Activated B cell treated with CpG ODN at 0.5 μM for 24 hours (primary cell): ENCODE measurements at regions of chr10 and their contacts with region 1.

Region 1: DNA sequence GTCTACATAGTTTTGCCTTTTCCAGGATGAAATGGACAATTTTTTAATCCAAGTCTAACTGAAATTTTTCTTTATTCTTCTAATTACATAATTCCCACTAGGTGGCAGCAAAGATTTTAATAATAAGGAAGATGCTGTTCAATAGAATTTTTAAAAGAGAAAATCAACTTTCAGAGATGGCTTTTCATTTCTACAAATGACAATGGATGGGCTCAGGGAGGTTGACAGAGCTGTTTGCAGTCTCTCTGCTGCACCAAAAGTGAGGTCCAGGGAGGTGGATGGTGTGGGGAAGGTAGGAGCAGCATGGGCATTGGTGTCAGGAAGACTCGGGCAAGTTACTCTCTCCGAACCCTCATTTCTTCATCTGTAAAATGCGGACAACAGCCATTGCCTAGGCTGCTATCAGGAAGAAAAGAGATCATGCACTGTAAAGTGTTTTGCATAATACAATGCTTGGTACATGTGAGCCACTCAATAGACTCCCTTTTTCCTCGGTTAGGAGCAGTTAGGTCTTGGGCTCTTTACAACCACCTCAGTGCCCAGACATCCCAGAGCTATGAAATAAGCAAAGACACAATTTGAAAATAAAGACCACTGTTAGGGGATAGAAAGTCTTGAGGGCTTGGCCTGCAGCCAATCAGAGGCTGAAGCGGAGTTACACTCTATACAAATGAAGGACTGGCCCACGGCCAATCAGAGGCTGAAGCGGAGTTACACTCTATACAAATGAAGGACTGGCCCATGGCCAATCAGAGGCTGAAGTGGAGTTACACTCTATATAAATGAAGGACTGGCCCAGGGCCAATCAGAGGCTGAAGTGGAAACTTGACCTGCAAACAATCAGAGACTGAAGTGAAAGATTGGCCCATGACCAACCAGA is 107.1 kb downstream of the ABLIM1 start:
- DNase-seq: no peak
- ATAC-seq: no peak
- H3K4me3 Mint-ChIP-seq: no peak overlapping the region
- H3K27ac Mint-ChIP-seq: no peak overlapping the region
- H3K4me1 Mint-ChIP-seq: peaks cover 16% of the 10 kb centered on the region
- H3K27me3 Mint-ChIP-seq: no peaks in the 10 kb centered on the region
- CTCF ChIP-seq: no peak

Region 2: DNA sequence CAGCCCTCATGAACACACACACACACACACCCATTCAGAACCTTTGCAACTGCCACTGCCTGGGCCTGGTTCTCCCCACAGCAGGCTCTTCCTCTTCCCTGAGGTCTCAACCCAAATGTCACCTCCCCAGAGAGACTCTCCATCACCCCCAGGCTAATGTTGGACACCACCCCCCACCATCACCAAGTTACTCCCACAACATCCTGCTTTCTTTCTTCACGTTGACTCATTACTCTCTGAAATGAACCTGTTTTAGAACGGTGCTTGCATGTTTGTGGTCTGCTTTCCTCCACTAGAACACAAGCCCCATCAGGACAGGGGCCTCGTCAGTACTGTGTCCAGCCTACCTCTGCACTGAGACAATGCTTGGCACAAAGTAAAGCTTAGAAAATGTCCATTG is 162.7 kb before region 1 on chr10:
- CTCF ChIA-PET with region 1: no interaction called
- POLR2A ChIA-PET with region 1: no interaction called
- intact Hi-C with region 1: no loop called
- DNase-seq: no peak
- ATAC-seq: no peak
- H3K4me3 Mint-ChIP-seq: no peak overlapping the region
- H3K27ac Mint-ChIP-seq: no peak overlapping the region
- H3K4me1 Mint-ChIP-seq: no peaks in the 10 kb centered on the region
- H3K27me3 Mint-ChIP-seq: peaks cover 12% of the 10 kb centered on the region
- CTCF ChIP-seq: no peak

Region 3: GRCh38 chr10:114615600-114616007 is 64.6 kb after region 1 on chr10:
- CTCF ChIA-PET with region 1: no interaction called
- POLR2A ChIA-PET with region 1: no interaction called
- intact Hi-C with region 1: no loop called
- DNase-seq: no peak
- ATAC-seq: peak; percentile 58
- H3K4me3 Mint-ChIP-seq: peak overlapping the region; percentile 26
- H3K27ac Mint-ChIP-seq: peak overlapping the region; percentile 18
- H3K4me1 Mint-ChIP-seq: peaks cover 8% of the 10 kb centered on the region
- H3K27me3 Mint-ChIP-seq: no peaks in the 10 kb centered on the region
- CTCF ChIP-seq: no peak

Region 4: DNA sequence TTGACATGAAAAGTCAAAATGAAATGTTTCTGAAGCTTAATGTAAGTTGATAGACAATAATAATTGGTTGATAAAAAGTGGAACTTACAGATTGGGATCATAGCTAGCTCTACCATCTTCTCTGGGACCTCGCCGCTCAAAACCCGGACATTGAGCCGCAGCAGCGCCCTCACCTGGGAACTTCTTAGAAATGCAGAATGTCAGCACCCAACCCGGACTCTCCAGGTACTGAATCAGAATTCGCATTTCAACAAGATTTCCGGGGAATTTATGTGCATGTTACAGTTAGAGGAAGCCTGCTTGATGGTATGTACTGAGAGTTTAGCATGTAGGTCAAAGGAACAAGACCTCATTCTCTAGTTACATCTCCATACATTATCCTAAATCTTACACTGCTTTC is 143.8 kb after region 1 on chr10:
- CTCF ChIA-PET with region 1: no interaction called
- POLR2A ChIA-PET with region 1: no interaction called
- intact Hi-C with region 1: loop called (anchors 1 kb)
- DNase-seq: no peak
- ATAC-seq: no peak
- H3K4me3 Mint-ChIP-seq: no peak overlapping the region
- H3K27ac Mint-ChIP-seq: no peak overlapping the region
- H3K4me1 Mint-ChIP-seq: no peaks in the 10 kb centered on the region
- H3K27me3 Mint-ChIP-seq: peaks cover 4% of the 10 kb centered on the region
- CTCF ChIP-seq: no peak

Region 5: DNA sequence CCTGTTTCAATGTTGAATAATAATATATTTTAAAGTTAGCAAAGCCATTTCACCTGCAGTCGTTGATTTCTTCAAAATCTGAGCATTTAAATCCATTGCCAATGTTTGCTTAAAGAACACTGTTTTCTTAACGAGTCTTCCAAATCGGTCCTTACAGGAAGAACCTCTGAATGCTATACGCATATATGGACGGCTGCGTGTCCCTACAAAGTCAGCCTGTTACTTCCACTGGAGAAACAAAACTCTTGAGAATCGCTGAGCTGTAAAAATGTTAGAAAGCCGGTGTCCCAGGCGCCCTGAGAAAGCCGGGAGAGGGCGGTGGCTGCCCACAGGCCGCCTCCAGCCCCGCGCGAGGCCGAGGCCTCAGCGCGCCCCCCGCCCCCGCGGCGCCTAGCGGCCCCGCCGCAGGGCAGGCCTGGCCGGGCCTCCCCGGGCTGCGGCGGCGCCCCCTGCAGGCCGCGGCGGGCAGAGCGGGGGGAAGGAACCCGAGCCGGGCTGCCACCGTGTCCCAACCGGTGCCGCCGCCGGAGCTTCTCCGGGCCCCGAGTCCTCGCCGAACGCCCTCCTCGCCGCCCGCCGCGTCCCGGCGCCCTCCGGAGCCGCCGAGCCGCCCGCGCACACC is 270.4 kb after region 1 on chr10 and contains the start of gene FHIP2A:
- CTCF ChIA-PET with region 1: interaction called, 3 read pairs
- POLR2A ChIA-PET with region 1: no interaction called
- intact Hi-C with region 1: loop called (anchors 5 kb)
- DNase-seq: peak; percentile 95
- ATAC-seq: peak; percentile 93
- H3K4me3 Mint-ChIP-seq: peak within 1 kb of the TSS; percentile 91
- H3K27ac Mint-ChIP-seq: peak within 1 kb of the TSS; percentile 90
- H3K4me1 Mint-ChIP-seq: peaks cover 27% of the 10 kb centered on the region
- H3K27me3 Mint-ChIP-seq: no peaks in the 10 kb centered on the region
- CTCF ChIP-seq: no peak
- total RNA-seq, gene FHIP2A: 16.5 and 20.2 TPM in 2 replicates

Region 6: GRCh38 chr10:115129752-115130151 is 578.8 kb after region 1 on chr10:
- CTCF ChIA-PET with region 1: interaction called, 3 read pairs
- POLR2A ChIA-PET with region 1: no interaction called
- intact Hi-C with region 1: loop called (anchors 1 kb)
- DNase-seq: no peak
- ATAC-seq: no peak
- H3K4me3 Mint-ChIP-seq: no peak overlapping the region
- H3K27ac Mint-ChIP-seq: no peak overlapping the region
- H3K4me1 Mint-ChIP-seq: no peaks in the 10 kb centered on the region
- H3K27me3 Mint-ChIP-seq: peaks cover 2% of the 10 kb centered on the region
- CTCF ChIP-seq: no peak